ENCODE measurements at regions of chr5 and their contacts with region 1.

Region 1: DNA sequence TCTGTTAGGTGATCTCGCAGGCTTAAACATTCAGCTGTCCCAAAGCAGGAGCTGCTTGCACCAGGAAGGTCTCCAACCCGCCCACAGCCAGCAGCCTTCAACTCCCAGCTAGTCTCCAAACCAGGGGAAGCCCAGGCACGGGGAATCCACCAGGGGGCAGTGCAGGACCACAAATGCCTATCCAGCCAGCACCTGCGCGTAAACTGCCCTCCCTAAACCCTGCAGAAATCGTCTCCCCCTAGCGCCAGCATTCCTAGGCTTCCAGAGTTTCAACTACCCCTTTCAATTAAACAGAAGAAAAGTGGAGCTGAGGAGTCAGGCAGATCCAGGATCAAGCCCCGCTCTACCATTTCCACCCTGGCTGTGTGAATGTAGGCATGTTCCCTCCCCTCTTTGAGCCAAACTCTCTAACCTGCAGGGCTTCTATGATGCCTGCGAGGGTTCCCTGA is 72.0 kb downstream of the HRH2 start:
- H3K4me3 ChIP-seq: no peak overlapping the region
- H3K27ac ChIP-seq: no peak overlapping the region
- H3K4me1 ChIP-seq: no peaks in the 10 kb centered on the region
- CTCF ChIP-seq: peak; percentile 98

Region 2: GRCh38 chr5:175718401-175719108 is 11.3 kb before region 1 on chr5:
- CTCF ChIA-PET with region 1: interaction called, 45 read pairs
- POLR2A ChIA-PET with region 1: no interaction called
- H3K4me3 ChIP-seq: no peak overlapping the region
- H3K27ac ChIP-seq: no peak overlapping the region
- H3K4me1 ChIP-seq: no peaks in the 10 kb centered on the region
- CTCF ChIP-seq: no peak

Region 3: DNA sequence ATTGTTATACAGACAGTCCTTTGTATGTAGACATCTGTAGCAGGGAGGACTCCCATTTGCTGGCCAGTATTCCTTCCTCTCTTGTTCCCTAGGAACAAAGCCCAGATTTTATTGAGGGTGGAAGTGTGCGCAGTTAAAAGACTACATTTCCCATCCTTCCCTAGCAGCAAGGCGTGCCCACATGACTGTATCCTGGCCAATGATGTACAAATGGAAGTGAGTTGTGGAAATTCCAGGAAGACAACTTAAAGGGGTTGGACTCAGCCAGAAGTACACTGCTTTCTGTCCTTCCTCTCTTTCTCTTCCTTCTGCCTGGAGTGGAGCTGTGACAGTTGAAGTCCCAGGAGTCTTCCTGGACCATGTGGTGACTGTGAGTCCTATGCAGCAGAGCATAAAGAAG is 17.0 kb after region 1 on chr5:
- CTCF ChIA-PET with region 1: interaction called, 15 read pairs
- POLR2A ChIA-PET with region 1: no interaction called
- H3K4me3 ChIP-seq: no peak overlapping the region
- H3K27ac ChIP-seq: no peak overlapping the region
- H3K4me1 ChIP-seq: no peaks in the 10 kb centered on the region
- CTCF ChIP-seq: no peak

Region 4: DNA sequence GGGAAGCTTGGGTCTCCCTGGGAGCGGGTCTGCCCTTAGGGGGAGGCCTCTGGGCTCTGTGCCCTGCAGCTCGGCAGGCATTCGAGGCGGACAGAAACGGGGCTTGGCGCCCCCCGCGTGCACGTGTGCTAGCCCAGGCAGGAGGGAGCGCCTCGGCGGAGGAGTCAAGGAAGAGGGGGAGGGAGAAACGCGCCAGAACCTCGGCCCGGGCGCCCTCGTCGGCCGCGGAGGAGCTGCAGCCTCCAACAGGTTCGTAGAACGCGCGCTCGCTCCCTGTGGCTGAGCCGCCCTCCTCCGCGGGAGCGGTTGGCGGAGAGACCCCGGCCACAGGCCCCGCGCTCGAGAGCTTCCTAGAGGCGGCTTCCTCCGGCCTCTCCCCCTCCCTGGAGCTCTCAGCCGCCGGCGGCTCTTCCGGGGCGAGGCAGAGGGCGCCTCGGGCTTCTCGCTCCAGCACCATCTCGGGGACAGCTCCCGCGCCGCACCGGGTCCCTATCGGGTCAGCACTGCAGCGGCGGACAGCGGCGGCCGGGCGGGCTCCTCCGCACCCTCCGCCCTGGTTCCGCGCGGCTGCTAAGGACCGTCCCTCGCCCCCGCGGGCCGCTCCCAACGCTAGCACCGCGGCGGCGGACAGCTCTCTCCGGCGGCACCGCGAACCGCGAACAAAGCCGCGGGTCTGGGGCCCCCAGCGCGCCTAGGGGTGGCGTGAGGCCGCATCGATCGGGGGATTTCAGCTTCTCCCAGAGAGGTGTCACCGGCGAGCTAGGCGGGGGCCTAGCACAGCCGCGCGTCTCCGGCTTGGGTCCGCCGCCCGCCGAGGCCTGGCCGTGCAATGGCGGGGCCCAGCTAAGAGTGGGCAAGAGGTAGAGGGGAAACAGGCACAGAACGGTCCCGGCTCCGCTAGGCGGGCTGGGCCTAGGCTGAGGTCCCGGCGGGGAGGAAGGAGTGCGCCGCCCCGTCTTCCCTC is 67.0 kb after region 1 on chr5:
- CTCF ChIA-PET with region 1: interaction called, 16 read pairs
- POLR2A ChIA-PET with region 1: no interaction called
- H3K4me3 ChIP-seq: peak overlapping the region; percentile 32
- H3K27ac ChIP-seq: no peak overlapping the region
- H3K4me1 ChIP-seq: peaks cover 2% of the 10 kb centered on the region; the same call in 1 of the 2 replicates
- CTCF ChIP-seq: peak; percentile 5; the same call in 1 of the 2 replicates

Region 5: DNA sequence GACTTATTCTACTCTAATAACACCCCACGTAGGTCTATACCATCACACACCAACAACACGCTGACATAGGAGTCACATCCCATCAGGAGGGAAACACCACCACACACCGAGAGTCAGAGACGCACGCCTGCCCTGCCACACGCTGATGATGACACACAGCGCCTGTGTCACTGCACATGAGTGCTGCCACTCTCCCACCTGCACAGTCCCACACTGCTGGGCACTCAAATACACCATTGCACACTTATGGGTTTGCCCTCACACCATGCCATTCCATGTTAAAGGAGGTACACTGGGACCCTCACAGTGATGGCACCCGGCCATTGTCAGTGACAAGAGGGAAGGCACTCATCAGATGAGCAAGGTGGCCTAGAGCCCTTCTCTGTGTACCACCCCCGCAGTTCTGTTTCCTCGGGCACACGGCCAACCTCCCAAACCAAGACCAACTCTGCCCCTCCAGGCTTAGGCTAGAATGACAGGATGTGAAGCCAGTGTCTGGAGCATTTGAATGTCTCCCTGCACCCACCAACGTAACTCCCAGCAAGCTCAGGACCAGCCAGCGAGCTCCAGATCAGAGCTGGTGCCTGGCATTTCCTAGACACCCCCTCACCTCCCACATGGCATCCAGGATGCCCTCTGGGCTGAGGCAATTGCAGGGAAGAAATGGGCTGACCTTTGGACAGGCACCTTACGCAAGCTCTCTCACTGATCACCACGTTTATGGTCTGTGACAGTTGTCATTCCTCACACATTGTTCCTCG is 137.9 kb after region 1 on chr5:
- CTCF ChIA-PET with region 1: interaction called, 35 read pairs
- POLR2A ChIA-PET with region 1: no interaction called
- H3K4me3 ChIP-seq: no peak overlapping the region
- H3K27ac ChIP-seq: no peak overlapping the region
- H3K4me1 ChIP-seq: no peaks in the 10 kb centered on the region
- CTCF ChIP-seq: peak; percentile 41; the same call in 1 of the 2 replicates

Region 6: GRCh38 chr5:175873088-175873454 is 143.2 kb after region 1 on chr5:
- CTCF ChIA-PET with region 1: interaction called, 35 read pairs
- POLR2A ChIA-PET with region 1: no interaction called
- H3K4me3 ChIP-seq: no peak overlapping the region
- H3K27ac ChIP-seq: no peak overlapping the region
- H3K4me1 ChIP-seq: no peaks in the 10 kb centered on the region
- CTCF ChIP-seq: no peak; the same call in 1 of the 2 replicates